CD4-positive, alpha-beta T cell (primary cell): ENCODE measurements at regions of chr1 and their contacts with region 1.

Region 1: DNA sequence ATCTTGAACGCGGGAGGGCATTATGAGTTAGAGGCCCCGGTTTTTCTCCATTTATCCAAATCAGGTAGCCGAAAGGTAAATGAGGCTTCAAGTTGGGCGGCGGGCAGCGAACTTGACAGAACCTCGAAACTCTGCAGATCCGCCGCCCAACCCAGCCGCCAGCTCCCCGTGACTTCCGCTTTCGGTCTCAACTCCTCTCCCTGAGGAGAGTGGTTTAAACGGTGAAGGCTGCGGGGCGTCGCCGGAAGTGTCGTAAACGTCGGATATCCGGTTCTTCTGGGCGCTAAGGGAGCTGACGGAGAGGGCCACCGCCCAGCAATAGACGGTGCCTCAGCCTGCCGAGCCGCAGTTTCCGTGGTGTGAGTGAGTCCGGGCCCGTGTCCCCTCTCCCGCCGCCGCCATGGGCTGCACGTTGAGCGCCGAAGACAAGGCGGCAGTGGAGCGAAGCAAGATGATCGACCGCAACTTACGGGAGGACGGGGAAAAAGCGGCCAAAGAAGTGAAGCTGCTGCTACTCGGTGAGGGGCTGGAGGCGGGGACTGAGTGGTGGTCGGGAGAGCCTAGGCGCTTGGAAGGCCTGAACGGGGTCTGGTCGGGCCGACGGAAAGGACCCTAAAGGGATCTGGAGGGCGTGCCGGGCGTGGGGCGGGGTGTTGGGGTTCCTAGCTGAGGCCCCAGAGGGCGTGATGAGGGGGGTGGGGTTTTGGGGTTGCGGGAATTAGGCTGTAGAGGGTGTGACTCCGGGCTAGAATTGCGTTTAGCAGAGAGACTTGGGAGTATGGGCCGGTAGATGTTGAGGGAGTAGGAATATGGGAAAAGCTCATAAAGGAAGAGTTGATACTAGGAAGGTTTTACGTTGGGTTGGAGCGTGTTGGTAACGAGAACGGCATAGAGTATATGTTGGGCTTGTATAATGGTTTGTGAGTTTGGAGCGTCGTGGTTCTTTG is at the start of gene GNAI3:
- DNase-seq: peak; percentile 91 to 98 (median 95)
- ATAC-seq: peak; percentile 90
- H3K4me3 ChIP-seq: peak within 1 kb of the TSS; percentile 73
- H3K4me3 Mint-ChIP-seq: peak within 1 kb of the TSS; percentile 99
- H3K27ac ChIP-seq: peak within 1 kb of the TSS; percentile 87 to 92
- H3K27ac Mint-ChIP-seq: peak within 1 kb of the TSS; percentile 97
- H3K4me1 ChIP-seq: peaks cover 21% of the 10 kb centered on the region
- H3K4me1 Mint-ChIP-seq: peaks cover 57% of the 10 kb centered on the region
- H3K27me3 ChIP-seq: no peaks in the 10 kb centered on the region
- H3K27me3 Mint-ChIP-seq: no peaks in the 10 kb centered on the region
- CTCF ChIP-seq: no peak
- total RNA-seq, gene GNAI3: 5.1 to 5.4 TPM

Region 2: DNA sequence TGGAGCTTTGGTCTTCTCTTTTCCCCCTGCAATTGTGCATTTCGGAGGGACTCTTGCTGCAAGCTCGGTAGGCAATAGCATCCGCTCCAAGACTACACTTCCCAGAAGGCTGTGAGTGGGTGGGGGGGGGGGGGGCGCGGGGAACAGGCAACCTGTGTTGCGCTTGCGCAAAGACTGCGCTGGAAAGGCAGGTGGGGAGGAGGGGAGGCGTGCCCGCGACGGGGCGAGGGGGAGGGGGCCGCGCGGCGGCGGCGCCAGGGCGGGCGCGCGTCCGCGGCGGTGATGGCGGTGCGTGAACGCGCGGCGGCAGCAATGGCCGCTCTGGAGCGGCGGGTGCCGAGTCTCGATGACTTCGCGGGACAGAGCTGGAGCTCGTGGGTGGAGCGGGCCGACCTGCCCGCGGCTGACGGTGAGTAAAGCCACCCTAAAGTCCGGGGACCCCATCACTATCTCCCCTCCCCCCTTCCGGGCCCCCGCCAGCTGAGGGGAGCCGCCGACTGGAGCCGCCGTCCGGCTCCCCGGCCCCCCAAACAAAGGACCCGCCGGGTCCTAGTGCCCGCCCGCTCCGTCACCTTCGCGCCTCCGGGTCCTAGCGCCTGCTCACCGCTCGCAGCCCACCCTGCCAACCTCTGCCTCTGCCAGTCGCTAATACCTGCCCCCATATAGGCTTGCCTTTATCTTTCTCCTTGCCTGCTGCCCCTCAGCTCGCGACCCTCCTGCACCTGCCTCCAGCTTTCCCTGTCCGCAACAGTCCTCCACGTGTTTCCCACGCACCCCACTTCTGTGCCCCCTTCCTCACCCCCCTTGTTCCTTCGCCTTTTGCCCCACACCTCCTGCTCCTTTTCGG is 64.7 kb before region 1 on chr1 and contains the start of gene ATXN7L2:
- CTCF ChIA-PET with region 1: interaction called, 6 read pairs
- POLR2A ChIA-PET with region 1: interaction called, 21 read pairs
- intact Hi-C with region 1: no loop called
- DNase-seq: peak; percentile 86 to 98 (median 92)
- ATAC-seq: peak; percentile 83
- H3K4me3 ChIP-seq: peak within 1 kb of the TSS; percentile 76
- H3K4me3 Mint-ChIP-seq: peak within 1 kb of the TSS; percentile 93
- H3K27ac ChIP-seq: peak within 1 kb of the TSS; percentile 74 to 78
- H3K27ac Mint-ChIP-seq: peak within 1 kb of the TSS; percentile 87
- H3K4me1 ChIP-seq: peaks cover 23% of the 10 kb centered on the region
- H3K4me1 Mint-ChIP-seq: peaks cover 39% of the 10 kb centered on the region
- H3K27me3 ChIP-seq: no peaks in the 10 kb centered on the region
- H3K27me3 Mint-ChIP-seq: peaks cover 1% of the 10 kb centered on the region
- CTCF ChIP-seq: no peak
- total RNA-seq, gene ATXN7L2: 11.8 to 13.1 TPM

Region 3: GRCh38 chr1:109521002-109521951 is 27.3 kb before region 1 on chr1:
- CTCF ChIA-PET with region 1: no interaction called
- POLR2A ChIA-PET with region 1: no interaction called
- intact Hi-C with region 1: no loop called
- DNase-seq: no peak
- ATAC-seq: no peak
- H3K4me3 ChIP-seq: no peak overlapping the region
- H3K4me3 Mint-ChIP-seq: no peak overlapping the region
- H3K27ac ChIP-seq: no peak overlapping the region
- H3K27ac Mint-ChIP-seq: no peak overlapping the region
- H3K4me1 ChIP-seq: no peaks in the 10 kb centered on the region
- H3K4me1 Mint-ChIP-seq: no peaks in the 10 kb centered on the region
- H3K27me3 ChIP-seq: no peaks in the 10 kb centered on the region
- H3K27me3 Mint-ChIP-seq: no peaks in the 10 kb centered on the region
- CTCF ChIP-seq: no peak

Region 4: GRCh38 chr1:109532365-109533136 is 16.0 kb before region 1 on chr1:
- CTCF ChIA-PET with region 1: interaction called, 9 read pairs
- POLR2A ChIA-PET with region 1: interaction called, 15 read pairs
- intact Hi-C with region 1: no loop called
- DNase-seq: peak; percentile 83 to 95 (median 92)
- ATAC-seq: peak; percentile 92
- H3K4me3 ChIP-seq: peak overlapping the region; percentile 37
- H3K4me3 Mint-ChIP-seq: peak overlapping the region; percentile 84
- H3K27ac ChIP-seq: no peak overlapping the region
- H3K27ac Mint-ChIP-seq: peak overlapping the region; percentile 29
- H3K4me1 ChIP-seq: peaks cover 35% of the 10 kb centered on the region
- H3K4me1 Mint-ChIP-seq: peaks cover 35% of the 10 kb centered on the region
- H3K27me3 ChIP-seq: no peaks in the 10 kb centered on the region
- H3K27me3 Mint-ChIP-seq: no peaks in the 10 kb centered on the region
- CTCF ChIP-seq: peak; percentile 78

Region 5: DNA sequence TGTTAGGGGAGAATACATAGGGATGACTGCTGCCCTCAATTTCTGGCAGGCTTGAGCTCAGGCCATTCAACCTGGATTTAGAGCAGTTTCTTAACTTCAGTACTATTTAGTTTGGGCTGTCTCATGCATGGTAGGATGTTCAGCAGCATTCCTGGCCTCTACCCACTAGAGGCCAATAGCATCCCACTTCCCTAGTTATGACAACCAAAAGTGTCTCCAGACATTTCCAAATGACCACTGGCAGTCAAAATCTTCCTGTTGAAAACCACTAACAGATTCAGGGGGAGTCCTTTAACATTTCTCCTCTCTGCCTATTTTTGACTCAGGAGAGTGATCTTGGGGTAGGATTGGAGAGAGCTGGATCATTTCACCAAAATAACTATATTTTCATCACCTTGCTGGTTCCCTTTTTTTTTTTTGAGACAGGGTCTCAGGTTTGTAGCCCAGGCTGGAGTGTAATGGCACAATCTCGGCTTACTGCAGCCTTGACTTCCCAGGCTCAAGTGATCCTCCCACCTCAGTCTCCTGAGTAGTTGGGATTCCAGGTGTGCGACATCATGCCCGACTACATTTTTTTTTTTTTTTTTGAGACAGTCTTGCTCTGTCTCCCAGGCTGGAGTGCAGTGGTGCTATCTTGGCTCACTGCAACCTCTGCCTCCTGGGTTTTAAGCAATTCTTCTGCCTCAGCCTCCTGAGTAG is 62.2 kb after region 1 on chr1:
- CTCF ChIA-PET with region 1: interaction called, 10 read pairs
- POLR2A ChIA-PET with region 1: interaction called, 17 read pairs
- intact Hi-C with region 1: loop called in 1 of 2 experiments (anchors 2 kb)
- DNase-seq: no peak
- ATAC-seq: no peak
- H3K4me3 ChIP-seq: no peak overlapping the region
- H3K4me3 Mint-ChIP-seq: no peak overlapping the region
- H3K27ac ChIP-seq: no peak overlapping the region
- H3K27ac Mint-ChIP-seq: no peak overlapping the region
- H3K4me1 ChIP-seq: peaks cover 3% of the 10 kb centered on the region
- H3K4me1 Mint-ChIP-seq: peaks cover 3% of the 10 kb centered on the region
- H3K27me3 ChIP-seq: no peaks in the 10 kb centered on the region
- H3K27me3 Mint-ChIP-seq: no peaks in the 10 kb centered on the region
- CTCF ChIP-seq: no peak

Region 6: GRCh38 chr1:109643385-109644230 is 95.0 kb after region 1 on chr1:
- CTCF ChIA-PET with region 1: interaction called, 43 read pairs
- POLR2A ChIA-PET with region 1: interaction called, 18 read pairs
- intact Hi-C with region 1: loop called in 1 of 2 experiments (anchors 5 kb)
- DNase-seq: peak; percentile 79 to 91 (median 88)
- ATAC-seq: peak; percentile 94
- H3K4me3 ChIP-seq: no peak overlapping the region
- H3K4me3 Mint-ChIP-seq: no peak overlapping the region
- H3K27ac ChIP-seq: no peak overlapping the region
- H3K27ac Mint-ChIP-seq: no peak overlapping the region
- H3K4me1 ChIP-seq: peaks cover 15% of the 10 kb centered on the region
- H3K4me1 Mint-ChIP-seq: peaks cover 20% of the 10 kb centered on the region
- H3K27me3 ChIP-seq: no peaks in the 10 kb centered on the region
- H3K27me3 Mint-ChIP-seq: no peaks in the 10 kb centered on the region
- CTCF ChIP-seq: peak; percentile 85

Region 7: DNA sequence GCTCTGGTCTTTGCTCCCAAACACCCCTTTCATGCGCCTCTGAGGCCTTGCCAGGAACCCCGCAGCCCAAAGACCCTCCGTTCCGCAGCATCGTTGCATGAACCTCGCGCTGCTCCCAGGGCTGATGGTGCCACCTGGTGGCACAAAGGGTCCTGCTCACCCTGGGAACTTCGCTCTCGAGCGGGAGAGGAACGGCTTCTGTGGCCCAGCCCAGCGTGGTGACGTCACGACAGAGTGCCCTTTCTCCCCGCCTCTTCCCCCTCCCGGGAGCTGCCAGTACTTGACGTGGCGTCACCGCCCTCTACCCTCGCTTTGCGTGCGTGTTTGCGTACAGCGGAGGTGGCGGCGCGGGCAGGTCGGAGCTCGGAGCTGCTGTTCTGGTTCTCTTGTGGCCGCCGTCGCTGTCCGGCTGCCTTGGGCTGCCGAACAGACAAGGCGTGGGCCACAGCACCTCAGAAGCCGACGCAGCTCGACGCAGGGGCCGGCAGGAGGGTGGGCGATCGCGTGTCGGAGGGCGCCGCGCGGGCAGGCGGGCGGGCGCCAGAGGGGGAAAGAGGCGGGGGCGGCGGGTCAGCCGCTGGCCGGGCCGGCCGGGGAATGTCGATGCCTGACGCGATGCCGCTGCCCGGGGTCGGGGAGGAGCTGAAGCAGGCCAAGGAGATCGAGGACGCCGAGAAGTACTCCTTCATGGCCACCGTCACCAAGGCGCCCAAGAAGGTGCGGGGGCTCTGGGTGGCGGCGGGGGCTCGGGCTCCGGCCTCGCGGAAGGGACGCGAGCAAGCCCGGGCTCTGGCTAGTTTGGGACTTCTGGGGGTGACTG is 436.1 kb after region 1 on chr1 and contains the start of gene AHCYL1:
- CTCF ChIA-PET with region 1: interaction called, 21 read pairs
- POLR2A ChIA-PET with region 1: interaction called, 26 read pairs
- intact Hi-C with region 1: loop called (anchors 1 kb)
- DNase-seq: peak; percentile 98 to 100 (median 99)
- ATAC-seq: peak; percentile 99
- H3K4me3 ChIP-seq: peak within 1 kb of the TSS; percentile 90
- H3K4me3 Mint-ChIP-seq: peak within 1 kb of the TSS; percentile 99
- H3K27ac ChIP-seq: peak within 1 kb of the TSS; percentile 71 to 80
- H3K27ac Mint-ChIP-seq: peak within 1 kb of the TSS; percentile 97
- H3K4me1 ChIP-seq: peaks cover 29% of the 10 kb centered on the region
- H3K4me1 Mint-ChIP-seq: peaks cover 51% of the 10 kb centered on the region
- H3K27me3 ChIP-seq: no peaks in the 10 kb centered on the region
- H3K27me3 Mint-ChIP-seq: no peaks in the 10 kb centered on the region
- CTCF ChIP-seq: peak; percentile 92
- total RNA-seq, gene AHCYL1: 6.9 to 8.4 TPM